Naive thymus-derived CD4-positive, alpha-beta T cell (primary cell): ENCODE measurements at regions of chr2 and their contacts with region 1.

Region 1: DNA sequence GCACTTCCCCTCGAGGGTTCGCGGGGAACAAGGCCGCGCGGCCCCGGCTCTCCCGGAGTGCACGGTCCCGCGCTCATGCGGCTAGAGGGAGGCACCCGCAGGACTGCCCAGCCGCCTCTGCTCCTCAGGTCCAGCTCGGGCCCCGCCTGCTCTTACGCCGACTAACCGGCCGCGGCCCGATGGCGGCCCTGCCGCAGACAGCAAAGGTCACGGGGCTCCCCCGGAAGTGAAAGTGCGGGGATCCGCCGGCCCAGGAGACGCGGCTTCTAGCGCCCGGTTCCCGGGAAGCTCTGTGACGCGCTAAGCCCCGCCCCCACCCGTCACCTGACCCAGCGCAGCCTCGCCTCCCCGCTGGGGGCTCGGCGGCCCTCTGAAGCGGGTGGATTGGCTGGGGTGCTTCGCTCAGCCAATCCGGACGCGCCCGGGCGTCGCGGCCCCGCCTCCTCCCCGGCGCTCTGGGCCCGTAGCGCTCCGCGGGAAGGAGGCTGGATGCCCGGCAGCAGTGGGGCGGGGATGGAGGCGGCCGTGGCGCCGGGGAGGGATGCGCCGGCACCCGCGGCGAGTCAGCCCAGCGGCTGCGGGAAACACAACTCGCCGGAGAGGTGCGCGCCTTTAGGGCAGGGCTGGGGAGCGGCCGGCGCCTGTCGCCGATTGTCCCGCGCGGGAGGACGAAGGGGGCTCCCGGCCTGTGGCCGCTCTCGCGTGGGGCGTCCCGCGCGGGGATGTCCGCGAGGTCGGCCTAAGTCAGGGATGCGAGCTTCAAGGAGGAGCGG is at the start of gene SCLY:
- DNase-seq: peak; percentile 86 to 95 (median 93)
- ATAC-seq: peak; percentile 99
- H3K4me3 ChIP-seq: peak within 1 kb of the TSS; percentile 96
- H3K4me3 Mint-ChIP-seq: peak within 1 kb of the TSS; percentile 85 to 98 (median 88)
- H3K27ac ChIP-seq: peak within 1 kb of the TSS; percentile 85
- H3K27ac Mint-ChIP-seq: peak within 1 kb of the TSS; percentile 80 to 93 (median 90)
- H3K4me1 ChIP-seq: peaks cover 5 to 12% of the 10 kb centered on the region in 2 donors
- H3K4me1 Mint-ChIP-seq: peaks cover 24 to 57% (median 37%) of the 10 kb centered on the region in 7 donors
- H3K27me3 ChIP-seq: peaks cover 0 to 3% of the 10 kb centered on the region in 2 donors
- H3K27me3 Mint-ChIP-seq: peaks cover 3 to 16% (median 13%) of the 10 kb centered on the region in 5 donors
- total RNA-seq, gene SCLY: 16.1 to 47.3 (median 29.1) TPM

Region 2: GRCh38 chr2:237434866-237435311 is 625.8 kb before region 1 on chr2:
- CTCF ChIA-PET with region 1: no interaction called
- POLR2A ChIA-PET with region 1: no interaction called
- intact Hi-C with region 1: loop called in 1 of 2 experiments (anchors 5 kb)
- DNase-seq: peak; percentile 29 to 85 (median 71)
- ATAC-seq: peak; percentile 83
- H3K4me3 ChIP-seq: peak overlapping the region; percentile 44
- H3K4me3 Mint-ChIP-seq: peak overlapping the region; percentile 60 to 89 (median 81)
- H3K27ac ChIP-seq: peak overlapping the region; percentile 64
- H3K27ac Mint-ChIP-seq: peak overlapping the region; percentile 84 to 100 (median 95)
- H3K4me1 ChIP-seq: peaks cover 35 to 84% of the 10 kb centered on the region in 2 donors
- H3K4me1 Mint-ChIP-seq: peaks cover 53 to 94% (median 91%) of the 10 kb centered on the region in 7 donors
- H3K27me3 ChIP-seq: no peaks in the 10 kb centered on the region
- H3K27me3 Mint-ChIP-seq: no peaks in the 10 kb centered on the region

Region 3: GRCh38 chr2:237998530-237998929 is 62.2 kb before region 1 on chr2:
- CTCF ChIA-PET with region 1: no interaction called
- POLR2A ChIA-PET with region 1: no interaction called
- intact Hi-C with region 1: loop called in 1 of 2 experiments (anchors 1 kb)
- DNase-seq: peak in 3 of 9 donors; percentile 26 to 55 (median 35)
- ATAC-seq: peak; percentile 58
- H3K4me3 ChIP-seq: peak overlapping the region; percentile 36
- H3K4me3 Mint-ChIP-seq: peak overlapping the region; percentile 27 to 80 (median 58)
- H3K27ac ChIP-seq: peak overlapping the region; percentile 64
- H3K27ac Mint-ChIP-seq: peak overlapping the region; percentile 46 to 95 (median 81)
- H3K4me1 ChIP-seq: peaks cover 12 to 14% of the 10 kb centered on the region in 2 donors
- H3K4me1 Mint-ChIP-seq: peaks cover 11 to 52% (median 40%) of the 10 kb centered on the region in 7 donors
- H3K27me3 ChIP-seq: no peaks in the 10 kb centered on the region
- H3K27me3 Mint-ChIP-seq: no peaks in the 10 kb centered on the region

Region 4: DNA sequence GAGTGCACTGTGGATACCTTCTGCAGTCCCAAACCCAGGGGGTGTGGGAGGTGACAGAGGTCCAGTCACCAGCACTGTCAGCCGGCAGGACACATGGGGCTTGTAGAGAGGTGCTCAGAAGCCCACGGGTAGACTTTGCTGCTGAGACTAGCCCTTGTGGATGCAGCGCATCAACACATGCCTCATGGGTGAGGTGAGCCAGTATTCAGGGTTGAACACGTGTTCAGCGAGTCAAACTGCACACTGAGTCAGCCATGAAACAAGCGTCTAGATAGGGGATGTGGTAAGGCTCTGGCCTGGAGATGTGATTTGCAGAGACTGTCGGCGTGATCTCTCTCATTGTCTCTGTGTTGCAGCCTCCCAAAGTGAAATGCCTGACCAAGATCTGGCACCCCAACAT is 35.7 kb before region 1 on chr2:
- CTCF ChIA-PET with region 1: no interaction called
- POLR2A ChIA-PET with region 1: no interaction called
- intact Hi-C with region 1: no loop called
- DNase-seq: peak in 1 of 9 donors; percentile 49
- ATAC-seq: peak; percentile 80
- H3K4me3 ChIP-seq: no peak overlapping the region
- H3K4me3 Mint-ChIP-seq: peak overlapping the region in 1 of 10 donors; percentile 4
- H3K27ac ChIP-seq: no peak overlapping the region
- H3K27ac Mint-ChIP-seq: peak overlapping the region in 4 of 9 donors; percentile 40 to 59 (median 45)
- H3K4me1 ChIP-seq: no peaks in the 10 kb centered on the region
- H3K4me1 Mint-ChIP-seq: peaks cover 0 to 26% (median 11%) of the 10 kb centered on the region in 7 donors
- H3K27me3 ChIP-seq: no peaks in the 10 kb centered on the region
- H3K27me3 Mint-ChIP-seq: no peaks in the 10 kb centered on the region

Region 5: DNA sequence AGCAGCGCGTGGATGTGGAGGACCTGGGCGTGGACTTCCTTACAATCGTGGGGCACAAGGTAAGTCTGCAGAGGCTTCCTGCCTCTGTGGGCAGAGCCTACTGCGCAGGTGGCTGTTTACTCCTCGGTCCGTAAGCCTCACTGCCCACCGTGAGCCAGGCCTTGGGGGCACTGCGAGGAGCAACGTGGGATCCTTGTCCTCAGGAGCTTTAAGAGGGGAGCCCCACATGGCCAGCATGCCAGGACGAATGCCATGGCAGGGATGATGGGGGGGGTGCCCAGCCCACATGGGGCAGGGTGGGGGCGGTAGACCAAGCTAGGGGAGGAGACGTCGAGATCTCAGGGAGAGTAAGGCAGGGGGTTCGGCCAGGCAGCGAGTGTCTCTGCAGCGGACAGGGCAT is 21.4 kb after region 1 on chr2:
- CTCF ChIA-PET with region 1: no interaction called
- POLR2A ChIA-PET with region 1: no interaction called
- intact Hi-C with region 1: no loop called
- DNase-seq: peak in 1 of 9 donors; percentile 14
- ATAC-seq: no peak
- H3K4me3 ChIP-seq: no peak overlapping the region
- H3K4me3 Mint-ChIP-seq: no peak overlapping the region
- H3K27ac ChIP-seq: no peak overlapping the region
- H3K27ac Mint-ChIP-seq: no peak overlapping the region
- H3K4me1 ChIP-seq: no peaks in the 10 kb centered on the region
- H3K4me1 Mint-ChIP-seq: peaks cover 0 to 12% (median 2%) of the 10 kb centered on the region in 7 donors
- H3K27me3 ChIP-seq: no peaks in the 10 kb centered on the region
- H3K27me3 Mint-ChIP-seq: no peaks in the 10 kb centered on the region

Region 6: GRCh38 chr2:238203094-238203972 is 142.6 kb after region 1 on chr2 and contains the start of gene ILKAP:
- CTCF ChIA-PET with region 1: no interaction called
- POLR2A ChIA-PET with region 1: interaction called, 9 read pairs
- intact Hi-C with region 1: loop called (anchors 1 kb)
- DNase-seq: peak; percentile 87 to 95 (median 92)
- ATAC-seq: peak; percentile 98
- H3K4me3 ChIP-seq: peak within 1 kb of the TSS; percentile 67
- H3K4me3 Mint-ChIP-seq: peak within 1 kb of the TSS; percentile 84 to 94 (median 88)
- H3K27ac ChIP-seq: peak within 1 kb of the TSS; percentile 91
- H3K27ac Mint-ChIP-seq: peak within 1 kb of the TSS; percentile 84 to 95 (median 92)
- H3K4me1 ChIP-seq: peaks cover 20 to 35% of the 10 kb centered on the region in 2 donors
- H3K4me1 Mint-ChIP-seq: peaks cover 28 to 55% (median 43%) of the 10 kb centered on the region in 7 donors
- H3K27me3 ChIP-seq: no peaks in the 10 kb centered on the region
- H3K27me3 Mint-ChIP-seq: peaks cover 0 to 4% (median 0%) of the 10 kb centered on the region in 5 donors
- total RNA-seq, gene ILKAP: 68.1 to 126 (median 90.9) TPM

Region 7: DNA sequence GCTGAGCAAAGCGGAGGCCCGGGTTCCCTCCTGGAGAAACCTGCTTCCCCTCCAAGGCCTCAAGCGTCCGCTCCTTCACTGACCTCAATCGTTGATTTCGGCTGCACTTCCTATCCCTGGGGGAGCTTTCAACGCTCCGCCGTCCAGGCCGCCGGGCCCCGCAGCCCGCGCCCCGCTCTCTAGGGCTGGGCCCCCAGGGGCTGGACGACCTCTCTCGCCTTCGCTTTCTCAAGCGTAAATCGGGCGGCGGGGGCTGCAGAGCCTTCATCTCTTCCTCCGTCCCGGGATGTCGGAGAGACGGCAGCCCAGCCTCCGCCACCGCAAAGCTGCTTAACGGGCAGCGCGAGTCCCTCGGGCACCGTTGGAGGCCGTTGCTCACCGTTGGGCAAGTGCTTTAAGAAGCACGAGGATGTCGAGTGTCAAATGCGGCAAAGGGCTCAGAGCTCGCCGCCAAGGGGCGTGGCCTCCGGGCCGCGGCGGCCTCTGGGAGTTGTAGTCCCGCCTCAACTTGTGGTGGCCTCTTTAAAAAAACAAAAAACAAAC is 170.6 kb after region 1 on chr2:
- CTCF ChIA-PET with region 1: no interaction called
- POLR2A ChIA-PET with region 1: no interaction called
- intact Hi-C with region 1: loop called in 1 of 2 experiments (anchors 1 kb)
- DNase-seq: peak; percentile 37 to 84 (median 76)
- ATAC-seq: peak; percentile 94
- H3K4me3 ChIP-seq: peak overlapping the region; percentile 66
- H3K4me3 Mint-ChIP-seq: peak overlapping the region; percentile 70 to 91 (median 86)
- H3K27ac ChIP-seq: peak overlapping the region; percentile 31
- H3K27ac Mint-ChIP-seq: peak overlapping the region in 7 of 9 donors; percentile 39 to 86 (median 76)
- H3K4me1 ChIP-seq: peaks cover 5 to 8% of the 10 kb centered on the region in 2 donors
- H3K4me1 Mint-ChIP-seq: peaks cover 14 to 33% (median 26%) of the 10 kb centered on the region in 7 donors
- H3K27me3 ChIP-seq: peaks cover 0 to 5% of the 10 kb centered on the region in 2 donors
- H3K27me3 Mint-ChIP-seq: peaks cover 11 to 63% (median 16%) of the 10 kb centered on the region in 5 donors

Region 8: GRCh38 chr2:238320246-238320647 is 259.5 kb after region 1 on chr2 and contains the start of gene TRAF3IP1:
- CTCF ChIA-PET with region 1: no interaction called
- POLR2A ChIA-PET with region 1: no interaction called
- intact Hi-C with region 1: loop called in 1 of 2 experiments (anchors 5 kb)
- DNase-seq: peak; percentile 75 to 92 (median 86)
- ATAC-seq: peak; percentile 97
- H3K4me3 ChIP-seq: peak within 1 kb of the TSS; percentile 69
- H3K4me3 Mint-ChIP-seq: peak within 1 kb of the TSS; percentile 77 to 89 (median 82)
- H3K27ac ChIP-seq: peak within 1 kb of the TSS; percentile 51
- H3K27ac Mint-ChIP-seq: peak within 1 kb of the TSS in 6 of 9 donors; percentile 4 to 69 (median 45)
- H3K4me1 ChIP-seq: peaks cover 7 to 15% of the 10 kb centered on the region in 2 donors
- H3K4me1 Mint-ChIP-seq: peaks cover 9 to 29% (median 24%) of the 10 kb centered on the region in 7 donors
- H3K27me3 ChIP-seq: no peaks in the 10 kb centered on the region
- H3K27me3 Mint-ChIP-seq: peaks cover 0 to 34% (median 6%) of the 10 kb centered on the region in 5 donors
- total RNA-seq, gene TRAF3IP1: 6.2 to 13.3 (median 9.4) TPM